ENCODE measurements at regions of chr15 and their contacts with region 1.

Region 1: GRCh38 chr15:61226361-61227256 is 2.5 kb downstream of the RORA start:
- DNase-seq: no peak
- H3K4me3 ChIP-seq: peak overlapping the region; percentile 67
- H3K27me3 ChIP-seq: peaks cover 6% of the 10 kb centered on the region
- CTCF ChIP-seq: no peak

Region 2: GRCh38 chr15:61195116-61196002 is 31.2 kb before region 1 on chr15:
- CTCF ChIA-PET with region 1: interaction called, 11 read pairs
- POLR2A ChIA-PET with region 1: no interaction called
- DNase-seq: no peak
- H3K4me3 ChIP-seq: no peak overlapping the region
- H3K27me3 ChIP-seq: no peaks in the 10 kb centered on the region
- CTCF ChIP-seq: peak; percentile 77